ENCODE measurements at regions of chr15 and their contacts with region 1.

Region 1: GRCh38 chr15:101294731-101295606 is at the start of gene SNRPA1:
- DNase-seq: peak; percentile 96
- H3K4me3 ChIP-seq: peak within 1 kb of the TSS; percentile 90
- H3K27ac ChIP-seq: peak within 1 kb of the TSS; percentile 84
- H3K4me1 ChIP-seq: peaks cover 27% of the 10 kb centered on the region
- CTCF ChIP-seq: no peak
- total RNA-seq, gene SNRPA1: 54.3 and 70.9 TPM in 2 replicates

Region 2: GRCh38 chr15:100602064-100602822 is 692.7 kb before region 1 on chr15 and contains the starts of genes ASB7 and LINS1:
- CTCF ChIA-PET with region 1: no interaction called
- POLR2A ChIA-PET with region 1: no interaction called
- intact Hi-C with region 1: loop called (anchors 5 kb)
- DNase-seq: peak; percentile 100
- H3K4me3 ChIP-seq: peak within 1 kb of the TSS; percentile 99
- H3K27ac ChIP-seq: peak within 1 kb of the TSS; percentile 59
- H3K4me1 ChIP-seq: peaks cover 20% of the 10 kb centered on the region
- CTCF ChIP-seq: no peak
- total RNA-seq, gene ASB7: 10.9 and 13.1 TPM in 2 replicates
- total RNA-seq, gene LINS1: 6.6 and 7.5 TPM in 2 replicates

Region 3: GRCh38 chr15:101031213-101031612 is 263.8 kb before region 1 on chr15:
- CTCF ChIA-PET with region 1: no interaction called
- POLR2A ChIA-PET with region 1: no interaction called
- intact Hi-C with region 1: no loop called
- DNase-seq: no peak
- H3K4me3 ChIP-seq: no peak overlapping the region
- H3K27ac ChIP-seq: no peak overlapping the region
- H3K4me1 ChIP-seq: peaks cover 12% of the 10 kb centered on the region
- CTCF ChIP-seq: no peak

Region 4: GRCh38 chr15:101206176-101206591 is 88.8 kb before region 1 on chr15:
- CTCF ChIA-PET with region 1: no interaction called
- POLR2A ChIA-PET with region 1: no interaction called
- intact Hi-C with region 1: no loop called
- DNase-seq: no peak
- H3K4me3 ChIP-seq: no peak overlapping the region
- H3K27ac ChIP-seq: no peak overlapping the region
- H3K4me1 ChIP-seq: peaks cover 5% of the 10 kb centered on the region
- CTCF ChIP-seq: no peak

Region 5: GRCh38 chr15:101277038-101277882 is 17.7 kb before region 1 on chr15 and contains the start of gene SELENOS:
- CTCF ChIA-PET with region 1: no interaction called
- POLR2A ChIA-PET with region 1: interaction called, 12 read pairs
- intact Hi-C with region 1: loop called (anchors 2 kb)
- DNase-seq: peak; percentile 92
- H3K4me3 ChIP-seq: peak within 1 kb of the TSS; percentile 98
- H3K27ac ChIP-seq: peak within 1 kb of the TSS; percentile 38
- H3K4me1 ChIP-seq: peaks cover 14% of the 10 kb centered on the region
- CTCF ChIP-seq: no peak
- total RNA-seq, gene SELENOS: 29.1 and 31.1 TPM in 2 replicates

Region 6: DNA sequence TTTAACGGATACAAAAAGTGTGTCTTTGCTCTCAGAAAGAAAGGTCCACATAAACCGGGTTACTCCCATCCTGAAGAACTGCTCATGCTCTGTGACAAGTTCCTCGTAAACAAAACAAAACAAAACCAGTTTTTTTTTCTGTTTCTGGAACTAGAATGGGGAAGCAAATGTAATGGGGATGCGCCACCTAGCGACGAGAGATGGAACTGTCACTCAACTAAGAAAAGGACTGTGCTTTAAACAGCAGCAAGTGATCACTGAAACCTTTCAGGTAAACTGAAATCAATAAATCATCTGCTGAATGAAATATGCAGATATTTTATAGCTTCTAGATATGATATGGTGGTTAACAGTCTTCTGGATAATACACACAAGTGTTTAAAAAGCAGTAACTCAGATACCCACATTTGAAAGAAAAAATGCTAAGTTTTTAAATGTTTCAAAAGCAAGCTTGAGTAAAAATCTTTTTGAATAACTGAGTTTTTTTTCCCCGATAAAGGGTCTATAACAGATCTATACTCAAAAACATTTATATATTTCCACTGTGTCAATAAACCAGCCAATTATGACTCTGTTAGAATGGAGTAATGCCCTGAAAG is 346.3 kb after region 1 on chr15:
- CTCF ChIA-PET with region 1: no interaction called
- POLR2A ChIA-PET with region 1: interaction called, 5 read pairs
- intact Hi-C with region 1: loop called (anchors 1 kb)
- DNase-seq: peak; percentile 63
- H3K4me3 ChIP-seq: no peak overlapping the region
- H3K27ac ChIP-seq: peak overlapping the region; percentile 46
- H3K4me1 ChIP-seq: peaks cover 19% of the 10 kb centered on the region
- CTCF ChIP-seq: peak; percentile 99

Region 7: GRCh38 chr15:101723874-101724674 is 429.1 kb after region 1 on chr15 and contains the start of gene TARS3:
- CTCF ChIA-PET with region 1: no interaction called
- POLR2A ChIA-PET with region 1: no interaction called
- intact Hi-C with region 1: loop called (anchors 5 kb)
- DNase-seq: peak; percentile 91
- H3K4me3 ChIP-seq: peak within 1 kb of the TSS; percentile 72
- H3K27ac ChIP-seq: peak within 1 kb of the TSS; percentile 60
- H3K4me1 ChIP-seq: peaks cover 16% of the 10 kb centered on the region
- CTCF ChIP-seq: peak; percentile 43; the same call in 1 of the 2 replicates
- total RNA-seq, gene TARS3: 7.1 and 9.2 TPM in 2 replicates

Measured in OCI-LY7 (cell line).